Colonic mucosa (tissue), 4 donors: ENCODE measurements at regions of chr9 and their contacts with region 1.

Region 1: DNA sequence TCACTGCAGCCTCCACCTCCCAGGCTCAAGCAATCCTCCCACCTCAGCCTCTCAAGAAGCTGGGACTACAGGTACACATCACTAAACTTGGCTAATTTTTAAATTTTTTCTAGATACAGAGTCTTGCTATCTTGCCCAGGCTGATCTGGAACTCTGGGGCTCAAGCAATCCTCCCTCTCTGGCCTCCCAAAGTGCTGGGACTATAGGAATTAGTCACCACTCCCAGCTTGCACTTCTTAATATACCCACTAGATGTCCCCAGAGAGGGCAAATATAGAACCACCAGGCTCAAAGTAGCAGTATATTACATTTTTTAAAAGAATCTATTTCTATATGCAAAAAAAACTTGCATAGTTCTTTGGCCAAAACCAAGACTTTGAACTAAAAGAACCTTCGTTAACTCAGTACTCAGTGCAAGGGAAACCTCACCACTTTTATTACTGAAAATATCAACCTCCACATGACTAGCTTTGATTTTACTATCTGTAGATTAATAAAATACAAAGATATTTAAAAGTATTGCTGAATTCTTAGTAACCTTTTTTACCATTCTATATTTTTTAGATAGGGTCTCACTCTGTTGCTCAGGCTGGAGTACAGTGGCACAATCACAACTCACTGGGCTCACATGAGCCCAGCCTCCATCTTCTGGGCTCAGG is 25.8 kb upstream of the HSD17B3 start:
- DNase-seq: peak; percentile 67
- H3K4me3 ChIP-seq: no peak overlapping the region
- H3K27ac ChIP-seq: no peak overlapping the region
- H3K4me1 ChIP-seq: no peaks in the 10 kb centered on the region
- H3K27me3 ChIP-seq: no peaks in the 10 kb centered on the region
- CTCF ChIP-seq: peak; percentile 84

Region 2: GRCh38 chr9:96186591-96187011 is 141.2 kb before region 1 on chr9:
- intact Hi-C with region 1: no loop called
- DNase-seq: peak; percentile 71
- H3K4me3 ChIP-seq: peak overlapping the region; percentile 0
- H3K27ac ChIP-seq: peak overlapping the region; percentile 77
- H3K4me1 ChIP-seq: no peaks in the 10 kb centered on the region
- H3K27me3 ChIP-seq: no peaks in the 10 kb centered on the region
- CTCF ChIP-seq: no peak

Region 3: GRCh38 chr9:96449845-96450612 is 122.2 kb after region 1 on chr9 and contains the start of gene HABP4:
- intact Hi-C with region 1: loop called (anchors 10 kb)
- DNase-seq: peak; percentile 96
- H3K4me3 ChIP-seq: peak within 1 kb of the TSS; percentile 67
- H3K27ac ChIP-seq: no peak within 1 kb of the TSS
- H3K4me1 ChIP-seq: no peaks in the 10 kb centered on the region
- H3K27me3 ChIP-seq: no peaks in the 10 kb centered on the region
- CTCF ChIP-seq: no peak
- total RNA-seq, gene HABP4: 2.8 to 4.4 TPM

Region 4: DNA sequence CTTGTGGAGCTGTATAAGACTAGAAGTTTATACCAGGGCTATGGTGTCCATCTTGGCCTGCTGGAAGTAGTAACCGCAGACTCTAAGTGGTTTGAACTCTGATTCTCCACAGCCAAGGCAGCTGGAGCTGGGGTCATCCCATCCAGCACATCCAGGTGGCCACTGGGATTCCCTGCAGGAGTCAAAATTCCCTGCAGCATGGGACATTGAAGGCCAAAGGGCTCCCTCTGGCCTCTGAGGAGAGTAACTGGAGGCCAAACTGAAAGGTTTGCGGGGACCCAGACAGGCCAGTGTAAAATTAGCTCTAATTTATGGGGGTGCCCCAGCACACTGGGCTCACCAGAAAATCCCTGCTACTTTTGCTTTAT is 339.5 kb after region 1 on chr9:
- intact Hi-C with region 1: loop called (anchors 5 kb)
- DNase-seq: no peak
- H3K4me3 ChIP-seq: no peak overlapping the region
- H3K27ac ChIP-seq: no peak overlapping the region
- H3K4me1 ChIP-seq: no peaks in the 10 kb centered on the region
- H3K27me3 ChIP-seq: no peaks in the 10 kb centered on the region
- CTCF ChIP-seq: no peak